ENCODE measurements at regions of chr10 and their contacts with region 1.

Region 1: DNA sequence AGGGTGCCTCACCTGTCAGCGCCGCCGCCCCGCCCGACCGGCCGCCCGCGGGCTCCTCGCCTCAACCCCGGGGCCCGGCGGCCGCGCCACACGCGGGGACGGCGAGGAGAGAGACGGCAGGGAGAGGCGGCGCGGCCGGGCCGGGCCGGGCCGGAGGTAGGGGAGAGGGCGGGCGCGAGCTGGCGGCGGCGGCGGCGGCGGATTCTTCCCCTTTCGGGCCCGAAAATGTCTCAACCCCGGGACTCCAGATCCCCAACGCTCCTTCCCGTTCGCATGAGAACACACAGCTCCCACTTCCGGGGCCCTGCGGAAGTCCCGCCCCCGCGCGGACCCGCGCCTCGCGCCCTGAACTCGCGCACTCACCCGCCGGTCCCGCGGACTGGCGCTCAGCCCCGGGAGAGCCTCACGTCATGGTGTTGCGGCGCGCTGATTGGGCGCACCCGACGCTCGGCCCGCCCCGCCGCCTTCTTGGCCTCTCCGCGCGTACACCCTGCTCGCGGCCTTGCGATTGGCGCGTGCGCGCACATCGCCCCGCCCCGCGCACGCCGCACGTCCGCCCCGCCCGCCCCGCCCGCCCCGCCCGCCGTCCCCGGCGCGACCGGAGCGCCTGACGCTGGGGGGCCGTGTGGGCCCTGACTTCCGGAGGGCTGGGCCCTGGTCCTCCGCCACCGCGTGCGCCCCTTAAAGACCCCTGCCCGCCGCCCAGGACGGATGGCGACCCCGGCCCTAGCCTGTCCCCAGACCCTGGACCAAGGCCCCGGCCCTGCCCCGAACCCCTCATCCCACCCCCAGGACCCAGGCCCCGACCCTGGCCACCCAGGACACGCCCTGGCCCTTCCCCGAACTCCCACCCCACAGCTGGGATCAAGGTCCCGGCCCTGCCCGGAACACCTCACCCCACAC is at the start of gene LARP4B:
- DNase-seq: peak; percentile 95 to 99 (median 98)
- ATAC-seq: peak; percentile 98
- H3K4me3 ChIP-seq: peak within 1 kb of the TSS; percentile 42
- H3K4me3 Mint-ChIP-seq: peak within 1 kb of the TSS; percentile 82 to 99 (median 94)
- H3K27ac ChIP-seq: peak within 1 kb of the TSS; percentile 96
- H3K27ac Mint-ChIP-seq: peak within 1 kb of the TSS; percentile 91 to 96 (median 94)
- H3K4me1 ChIP-seq: peaks cover 9 to 12% of the 10 kb centered on the region in 2 donors
- H3K4me1 Mint-ChIP-seq: peaks cover 26 to 48% (median 41%) of the 10 kb centered on the region in 7 donors
- H3K27me3 ChIP-seq: no peaks in the 10 kb centered on the region
- H3K27me3 Mint-ChIP-seq: no peaks in the 10 kb centered on the region
- total RNA-seq, gene LARP4B: 65.2 to 114 (median 96.9) TPM

Region 2: GRCh38 chr10:404346-404745 is 527.3 kb before region 1 on chr10:
- CTCF ChIA-PET with region 1: no interaction called
- POLR2A ChIA-PET with region 1: no interaction called
- intact Hi-C with region 1: no loop called
- DNase-seq: no peak
- ATAC-seq: no peak
- H3K4me3 ChIP-seq: no peak overlapping the region
- H3K4me3 Mint-ChIP-seq: no peak overlapping the region
- H3K27ac ChIP-seq: no peak overlapping the region
- H3K27ac Mint-ChIP-seq: peak overlapping the region in 2 of 9 donors; percentile 6
- H3K4me1 ChIP-seq: no peaks in the 10 kb centered on the region
- H3K4me1 Mint-ChIP-seq: peaks cover 0 to 5% (median 0%) of the 10 kb centered on the region in 7 donors
- H3K27me3 ChIP-seq: no peaks in the 10 kb centered on the region
- H3K27me3 Mint-ChIP-seq: peaks cover 0 to 3% (median 0%) of the 10 kb centered on the region in 5 donors

Region 3: GRCh38 chr10:436911-437665 is 494.6 kb before region 1 on chr10:
- CTCF ChIA-PET with region 1: no interaction called
- POLR2A ChIA-PET with region 1: no interaction called
- intact Hi-C with region 1: loop called in 1 of 2 experiments (anchors 5 kb)
- DNase-seq: no peak
- ATAC-seq: no peak
- H3K4me3 ChIP-seq: peak overlapping the region; percentile 1
- H3K4me3 Mint-ChIP-seq: peak overlapping the region; percentile 2 to 60 (median 40)
- H3K27ac ChIP-seq: no peak overlapping the region
- H3K27ac Mint-ChIP-seq: peak overlapping the region in 3 of 9 donors; percentile 17 to 70 (median 24)
- H3K4me1 ChIP-seq: peaks cover 19 to 25% of the 10 kb centered on the region in 2 donors
- H3K4me1 Mint-ChIP-seq: peaks cover 21 to 64% (median 47%) of the 10 kb centered on the region in 7 donors
- H3K27me3 ChIP-seq: peaks cover 0 to 4% of the 10 kb centered on the region in 2 donors
- H3K27me3 Mint-ChIP-seq: peaks cover 0 to 14% (median 0%) of the 10 kb centered on the region in 5 donors

Region 4: DNA sequence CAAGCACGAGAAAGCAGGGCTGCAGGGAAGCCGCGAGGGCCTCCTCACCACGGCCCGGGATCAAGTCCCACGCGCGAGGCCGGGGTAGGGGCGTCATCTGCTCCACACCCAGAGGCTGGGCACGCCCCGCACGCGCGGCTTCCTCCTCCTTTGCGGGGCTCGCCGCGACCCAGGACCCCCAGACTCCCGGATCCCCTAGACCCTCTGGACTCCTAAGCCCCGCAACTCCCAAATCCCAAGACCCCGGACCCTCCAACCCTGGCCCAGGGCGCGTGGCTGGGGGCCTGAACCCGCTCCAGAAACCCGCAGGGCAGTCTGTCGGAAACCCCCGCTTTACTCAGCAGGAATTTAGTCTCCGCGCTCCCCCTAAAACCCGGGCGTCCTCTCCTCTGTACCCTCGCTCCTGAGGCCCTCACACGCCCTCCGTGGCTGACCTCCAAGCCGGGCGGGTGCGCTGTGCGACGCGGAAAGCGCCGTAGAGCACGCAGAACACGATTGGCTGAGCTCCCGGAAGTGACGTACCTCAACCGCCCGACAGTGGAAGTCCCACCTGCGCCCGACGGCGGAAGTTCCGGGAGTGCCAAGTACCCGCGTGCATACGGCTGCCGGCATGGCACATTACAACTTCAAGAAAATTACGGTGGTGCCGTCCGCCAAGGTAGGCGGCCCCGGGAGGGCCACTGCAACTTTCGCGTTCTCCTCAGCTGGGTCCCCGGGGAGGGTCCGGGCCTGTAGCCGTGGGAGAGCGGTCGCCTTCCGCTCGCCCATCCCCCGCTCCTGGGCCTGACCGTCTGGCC is 56.4 kb after region 1 on chr10 and contains the start of gene GTPBP4:
- CTCF ChIA-PET with region 1: no interaction called
- POLR2A ChIA-PET with region 1: interaction called, 8 read pairs
- intact Hi-C with region 1: loop called (anchors 1 kb)
- DNase-seq: peak; percentile 88 to 98 (median 95)
- ATAC-seq: peak; percentile 99
- H3K4me3 ChIP-seq: peak within 1 kb of the TSS; percentile 90
- H3K4me3 Mint-ChIP-seq: peak within 1 kb of the TSS; percentile 95 to 98 (median 96)
- H3K27ac ChIP-seq: peak within 1 kb of the TSS; percentile 95
- H3K27ac Mint-ChIP-seq: peak within 1 kb of the TSS; percentile 88 to 99 (median 97)
- H3K4me1 ChIP-seq: peaks cover 18 to 19% of the 10 kb centered on the region in 2 donors
- H3K4me1 Mint-ChIP-seq: peaks cover 21 to 45% (median 40%) of the 10 kb centered on the region in 7 donors
- H3K27me3 ChIP-seq: no peaks in the 10 kb centered on the region
- H3K27me3 Mint-ChIP-seq: no peaks in the 10 kb centered on the region
- total RNA-seq, gene GTPBP4: 39.0 to 81.8 (median 45.2) TPM